Activated naive CD4-positive, alpha-beta T cell treated with anti-CD3 and anti-CD28 coated beads, Interleukin-2, amount 10 ng/mL, durations not matched to agents 7 days and 5 days (primary cell): ENCODE measurements at regions of chr11 and their contacts with region 1.

Region 1: GRCh38 chr11:11028017-11028692 is 170.3 kb upstream of the ZBED5 start:
- DNase-seq: peak; percentile 85
- H3K4me3 Mint-ChIP-seq: no peak overlapping the region
- H3K27ac Mint-ChIP-seq: no peak overlapping the region
- H3K4me1 Mint-ChIP-seq: no peaks in the 10 kb centered on the region
- H3K27me3 Mint-ChIP-seq: peaks cover 19% of the 10 kb centered on the region

Region 2: DNA sequence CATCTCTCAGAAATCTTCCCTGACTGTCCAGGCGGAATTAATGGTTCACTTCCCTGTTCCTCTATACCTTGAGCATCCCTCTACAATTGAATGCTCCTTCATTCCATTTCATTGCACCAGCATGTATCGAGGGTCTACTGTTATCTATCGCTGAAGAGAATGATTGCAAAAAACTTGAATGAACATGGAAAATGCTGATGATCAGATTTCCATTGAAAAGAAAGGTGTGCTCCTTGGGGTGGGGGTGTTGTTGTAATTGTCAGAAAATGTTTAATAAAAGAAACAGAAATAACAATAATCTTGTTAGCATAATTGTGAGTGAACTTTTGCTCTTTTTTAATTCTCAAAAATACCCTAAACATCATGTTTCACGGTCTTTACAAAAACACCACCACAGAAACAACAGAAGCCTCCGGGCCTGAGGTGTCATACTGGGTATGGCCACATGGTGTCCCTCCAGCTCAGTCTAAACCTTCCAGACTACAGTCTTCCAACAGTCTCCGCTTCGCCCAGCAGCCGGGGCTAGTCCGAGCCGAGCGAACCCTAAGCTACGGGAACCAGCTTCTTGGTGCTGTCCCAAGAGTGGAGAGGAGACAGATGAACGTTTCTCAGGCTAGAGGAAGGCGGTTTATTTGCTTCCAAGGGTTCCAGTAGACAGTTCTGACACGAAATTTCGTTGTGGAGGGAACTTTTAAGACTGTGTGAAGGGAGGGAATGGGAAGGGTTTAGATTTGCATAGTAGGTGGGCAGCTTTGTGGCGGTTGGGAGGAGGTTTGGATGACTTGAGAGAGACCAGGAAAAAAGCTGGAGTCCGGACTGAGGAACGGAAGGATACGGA is 94.5 kb before region 1 on chr11:
- CTCF ChIA-PET with region 1: interaction called, 63 read pairs
- DNase-seq: peak; percentile 87
- H3K4me3 Mint-ChIP-seq: peak overlapping the region; percentile 58
- H3K27ac Mint-ChIP-seq: no peak overlapping the region
- H3K4me1 Mint-ChIP-seq: peaks cover 27% of the 10 kb centered on the region
- H3K27me3 Mint-ChIP-seq: peaks cover 77% of the 10 kb centered on the region

Region 3: GRCh38 chr11:11157185-11157584 is 129.0 kb after region 1 on chr11:
- CTCF ChIA-PET with region 1: interaction called, 43 read pairs
- DNase-seq: peak; percentile 73
- H3K4me3 Mint-ChIP-seq: no peak overlapping the region
- H3K27ac Mint-ChIP-seq: peak overlapping the region; percentile 84
- H3K4me1 Mint-ChIP-seq: peaks cover 24% of the 10 kb centered on the region
- H3K27me3 Mint-ChIP-seq: peaks cover 41% of the 10 kb centered on the region

Region 4: GRCh38 chr11:11265994-11266606 is 237.9 kb after region 1 on chr11:
- CTCF ChIA-PET with region 1: interaction called, 13 read pairs
- DNase-seq: peak; percentile 72
- H3K4me3 Mint-ChIP-seq: no peak overlapping the region
- H3K27ac Mint-ChIP-seq: no peak overlapping the region
- H3K4me1 Mint-ChIP-seq: no peaks in the 10 kb centered on the region
- H3K27me3 Mint-ChIP-seq: peaks cover 11% of the 10 kb centered on the region

Region 5: DNA sequence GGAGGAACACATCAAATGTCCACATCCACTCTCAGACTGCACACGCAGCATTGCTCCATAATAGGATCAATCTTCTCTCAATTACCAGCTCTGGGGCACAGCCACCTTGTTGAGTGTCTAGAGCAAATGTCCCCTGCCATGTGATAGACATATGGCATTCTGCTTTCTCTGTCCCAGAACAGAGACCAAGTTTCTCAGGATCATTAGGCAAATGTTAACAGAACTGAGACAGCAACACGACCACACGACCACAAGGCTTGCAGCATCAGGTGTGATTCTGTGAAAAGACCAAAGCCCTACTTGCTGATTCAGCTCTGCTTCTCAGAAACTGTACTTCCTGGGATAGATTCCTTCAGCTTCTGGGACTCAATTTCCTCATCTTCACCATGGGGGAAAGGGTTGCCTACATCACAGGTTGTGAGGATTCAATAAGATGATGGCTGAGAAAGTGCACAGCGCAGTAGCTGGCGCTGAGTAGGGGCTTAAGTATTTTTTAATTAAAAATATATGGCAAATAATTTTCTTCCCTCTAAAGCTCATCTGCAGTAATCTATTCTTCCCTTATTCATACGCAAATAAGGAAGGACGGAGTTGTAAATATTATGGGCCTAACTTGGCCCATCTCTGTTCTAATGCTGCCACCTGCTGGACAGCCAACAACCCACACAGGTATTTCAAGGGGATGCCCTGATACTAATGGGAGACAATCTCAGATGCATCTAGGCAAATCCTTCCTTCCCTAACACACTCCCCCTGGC is 759.3 kb after region 1 on chr11:
- CTCF ChIA-PET with region 1: interaction called, 58 read pairs
- DNase-seq: peak; percentile 80
- H3K4me3 Mint-ChIP-seq: no peak overlapping the region
- H3K27ac Mint-ChIP-seq: no peak overlapping the region
- H3K4me1 Mint-ChIP-seq: no peaks in the 10 kb centered on the region
- H3K27me3 Mint-ChIP-seq: peaks cover 7% of the 10 kb centered on the region